Right ventricle myocardium inferior (tissue), 1 donor: ENCODE measurements at regions of chr2 and their contacts with region 1.

Region 1: GRCh38 chr2:219543601-219544358 is at the starts of genes CHPF and TMEM198:
- DNase-seq: peak; percentile 98
- ATAC-seq: peak; percentile 95
- total RNA-seq, gene CHPF: 92.2 TPM
- total RNA-seq, gene TMEM198: 2.7 TPM

Region 2: DNA sequence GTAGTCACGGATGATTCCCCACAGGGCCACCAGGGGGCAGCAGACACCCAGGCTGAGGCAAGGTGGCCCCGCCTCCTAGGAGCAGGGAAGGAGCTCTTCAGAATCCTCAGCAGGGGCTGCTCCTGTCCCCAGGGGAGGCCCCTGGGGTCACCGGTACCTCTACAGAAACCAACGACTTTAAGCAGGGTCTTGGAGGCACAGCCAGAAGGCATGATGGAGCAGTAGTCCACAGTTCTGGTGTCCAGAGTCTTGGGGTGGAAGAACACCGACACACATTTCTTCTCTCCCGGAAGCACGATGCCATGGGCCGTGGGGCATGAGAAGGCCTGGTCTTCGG is 514.0 kb before region 1 on chr2:
- intact Hi-C with region 1: no loop called
- DNase-seq: peak; percentile 89
- ATAC-seq: peak; percentile 84

Region 3: GRCh38 chr2:219261024-219261855 is 282.5 kb before region 1 on chr2:
- intact Hi-C with region 1: no loop called
- DNase-seq: no peak
- ATAC-seq: no peak

Region 4: GRCh38 chr2:219689676-219690628 is 146.2 kb after region 1 on chr2:
- intact Hi-C with region 1: loop called (anchors 1 kb)
- DNase-seq: no peak
- ATAC-seq: peak; percentile 61

Region 5: GRCh38 chr2:219726916-219727315 is 183.1 kb after region 1 on chr2:
- intact Hi-C with region 1: loop called (anchors 2 kb)
- DNase-seq: no peak
- ATAC-seq: peak; percentile 48